ENCODE measurements at regions of chr13 and their contacts with region 1.

Region 1: GRCh38 chr13:106277484-106278154 is 257.8 kb downstream of the EFNB2 start:
- DNase-seq: no peak
- H3K4me3 ChIP-seq: no peak overlapping the region
- H3K27ac ChIP-seq: no peak overlapping the region
- H3K4me1 ChIP-seq: no peaks in the 10 kb centered on the region
- H3K27me3 ChIP-seq: no peaks in the 10 kb centered on the region
- CTCF ChIP-seq: no peak
- POLR2A ChIP-seq: no peak

Region 2: DNA sequence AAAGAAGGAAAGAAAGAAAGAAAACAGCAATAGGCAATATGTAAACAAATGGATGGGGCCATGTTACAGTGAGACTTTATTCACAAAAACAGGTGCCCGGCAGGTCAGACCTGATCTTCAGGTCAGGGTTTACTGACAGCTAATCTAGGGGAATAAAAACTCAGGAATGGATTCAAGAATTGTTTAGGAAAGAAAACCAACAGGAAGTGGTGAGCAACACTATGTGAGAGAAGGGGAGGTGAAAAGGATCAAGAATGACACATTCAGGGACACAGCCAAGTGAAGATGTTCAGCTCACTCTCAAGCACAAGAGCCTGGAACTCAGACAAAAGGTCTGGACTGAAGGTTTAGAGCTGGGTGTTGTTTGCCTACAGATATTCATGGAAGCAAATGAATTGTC is 13.4 kb after region 1 on chr13:
- CTCF ChIA-PET with region 1: interaction called, 12 read pairs
- POLR2A ChIA-PET with region 1: no interaction called
- dilution Hi-C with region 1: no loop called
- intact Hi-C with region 1: no loop called
- DNase-seq: peak; percentile 35
- H3K4me3 ChIP-seq: no peak overlapping the region
- H3K27ac ChIP-seq: no peak overlapping the region
- H3K4me1 ChIP-seq: no peaks in the 10 kb centered on the region
- H3K27me3 ChIP-seq: no peaks in the 10 kb centered on the region
- CTCF ChIP-seq: no peak
- POLR2A ChIP-seq: no peak

Region 3: DNA sequence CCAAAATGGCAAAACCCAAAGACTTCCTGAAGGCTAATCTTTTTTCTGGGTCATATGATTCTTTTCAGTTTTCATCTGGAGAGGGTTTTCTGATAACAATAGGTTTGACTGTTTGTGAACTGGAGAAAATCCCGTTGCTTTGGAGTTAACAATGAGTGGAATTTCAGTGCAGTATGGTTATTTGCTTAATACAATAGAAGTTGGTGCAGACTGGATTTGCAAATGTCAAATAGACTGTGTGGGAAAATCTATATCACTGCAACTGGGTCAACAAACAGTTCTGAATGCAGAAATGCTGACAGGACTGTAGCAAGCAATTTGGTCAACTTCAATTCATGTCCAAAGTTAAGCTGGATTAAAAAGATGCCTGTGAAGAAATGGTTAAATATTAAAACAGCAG is 557.9 kb after region 1 on chr13:
- CTCF ChIA-PET with region 1: no interaction called
- POLR2A ChIA-PET with region 1: no interaction called
- dilution Hi-C with region 1: no loop called
- intact Hi-C with region 1: no loop called
- DNase-seq: peak; percentile 2
- H3K4me3 ChIP-seq: no peak overlapping the region
- H3K27ac ChIP-seq: no peak overlapping the region
- H3K4me1 ChIP-seq: no peaks in the 10 kb centered on the region
- H3K27me3 ChIP-seq: no peaks in the 10 kb centered on the region
- CTCF ChIP-seq: no peak
- POLR2A ChIP-seq: no peak

Measured in endothelial cell of umbilical vein (primary cell).